ENCODE measurements at regions of chr3 and their contacts with region 1.

Region 1: DNA sequence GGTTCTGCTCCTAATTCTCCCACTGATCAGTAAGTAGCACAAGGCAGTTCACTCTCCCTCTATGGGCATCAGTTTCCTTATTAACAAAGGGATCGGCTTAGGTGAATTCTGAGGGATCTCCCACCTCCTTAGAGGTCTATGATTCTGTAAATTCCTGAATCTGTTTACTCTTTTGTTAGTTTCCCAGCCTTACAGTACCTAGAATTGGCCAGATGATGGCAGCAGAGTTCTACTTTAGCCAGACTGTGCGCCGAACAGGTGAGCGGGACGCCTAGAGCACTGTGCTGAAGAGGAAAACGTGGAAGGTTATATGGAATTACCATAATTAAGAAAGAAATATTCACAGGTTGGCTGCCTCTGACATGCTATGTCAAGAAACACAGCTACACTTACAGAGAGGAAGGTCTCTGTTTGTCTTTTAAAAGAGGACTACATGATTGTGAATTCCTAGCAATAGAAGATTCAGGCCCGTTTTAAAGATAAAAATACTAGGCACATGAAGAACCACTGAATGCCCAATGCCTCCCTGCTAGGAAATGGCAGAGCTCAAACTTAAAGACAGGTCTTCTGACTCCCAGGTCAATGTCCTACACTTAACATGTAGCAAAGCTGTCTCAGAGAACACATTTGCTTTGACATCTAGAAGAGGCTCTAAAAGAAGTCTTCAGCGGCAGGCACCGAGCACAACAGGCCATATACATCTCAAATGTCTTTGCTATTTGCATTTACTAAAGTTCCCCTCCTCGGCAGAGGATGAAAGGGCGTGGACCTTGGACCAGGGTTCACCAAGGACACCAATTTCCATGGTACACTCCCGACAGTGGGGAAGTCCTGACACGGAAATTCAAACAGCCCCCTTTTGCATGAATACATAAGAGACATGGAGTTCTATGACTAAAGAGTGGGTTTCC is 259.9 kb downstream of the FGF12 start:
- DNase-seq: peak; percentile 46
- ATAC-seq: peak; percentile 77 to 83

Region 2: GRCh38 chr3:192545333-192545732 is 77.8 kb after region 1 on chr3:
- intact Hi-C with region 1: loop called in 1 of 2 experiments (anchors 10 kb)
- DNase-seq: no peak
- ATAC-seq: no peak

Region 3: DNA sequence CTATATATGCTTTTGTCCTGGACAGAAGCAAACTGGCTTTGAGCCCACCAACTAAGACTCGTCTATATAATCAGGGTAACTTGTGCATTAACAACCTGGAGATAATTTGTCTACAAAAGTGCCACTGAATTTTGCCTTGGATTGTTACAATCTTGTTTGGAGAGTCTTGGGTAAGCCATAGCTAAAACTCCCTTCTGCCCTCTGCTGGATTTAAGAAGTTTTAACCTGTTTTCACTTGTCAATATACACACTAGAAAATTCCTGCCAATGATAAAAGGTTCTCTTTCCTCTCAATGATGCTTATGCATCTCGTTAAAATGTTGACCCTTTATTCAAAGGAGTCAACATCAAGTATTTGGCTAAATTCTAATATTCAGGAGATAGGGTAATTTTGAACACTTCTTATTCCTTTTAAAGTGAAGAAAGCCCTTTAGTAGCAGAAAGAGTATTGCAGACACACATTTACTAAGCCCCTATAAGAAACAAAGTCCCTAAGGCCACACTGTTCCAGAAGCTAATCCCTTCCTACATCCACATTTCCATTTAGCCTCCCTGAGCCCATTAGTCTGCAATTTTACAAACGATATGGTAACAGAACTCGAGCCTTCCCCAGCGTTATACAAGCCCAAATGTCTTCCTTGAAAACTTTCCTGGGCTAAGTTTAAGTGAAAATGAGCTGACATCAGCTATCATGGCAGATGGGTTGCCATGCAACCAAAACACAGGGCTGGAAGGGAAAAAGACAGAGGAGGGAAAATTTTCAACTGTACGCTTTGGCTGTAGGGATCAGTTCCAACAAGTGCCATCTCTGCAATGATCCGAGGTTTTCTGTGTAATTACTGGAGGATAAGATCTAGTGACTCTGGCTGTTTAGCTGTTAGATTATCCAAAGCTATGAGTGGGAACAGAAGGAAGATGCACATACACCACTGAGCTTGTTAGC is 335.7 kb after region 1 on chr3:
- intact Hi-C with region 1: loop called in 1 of 2 experiments (anchors 1 kb)
- DNase-seq: no peak
- ATAC-seq: peak; percentile 62 to 71